OCI-LY7 (cell line): ENCODE measurements at regions of chr1 and their contacts with region 1.

Region 1: DNA sequence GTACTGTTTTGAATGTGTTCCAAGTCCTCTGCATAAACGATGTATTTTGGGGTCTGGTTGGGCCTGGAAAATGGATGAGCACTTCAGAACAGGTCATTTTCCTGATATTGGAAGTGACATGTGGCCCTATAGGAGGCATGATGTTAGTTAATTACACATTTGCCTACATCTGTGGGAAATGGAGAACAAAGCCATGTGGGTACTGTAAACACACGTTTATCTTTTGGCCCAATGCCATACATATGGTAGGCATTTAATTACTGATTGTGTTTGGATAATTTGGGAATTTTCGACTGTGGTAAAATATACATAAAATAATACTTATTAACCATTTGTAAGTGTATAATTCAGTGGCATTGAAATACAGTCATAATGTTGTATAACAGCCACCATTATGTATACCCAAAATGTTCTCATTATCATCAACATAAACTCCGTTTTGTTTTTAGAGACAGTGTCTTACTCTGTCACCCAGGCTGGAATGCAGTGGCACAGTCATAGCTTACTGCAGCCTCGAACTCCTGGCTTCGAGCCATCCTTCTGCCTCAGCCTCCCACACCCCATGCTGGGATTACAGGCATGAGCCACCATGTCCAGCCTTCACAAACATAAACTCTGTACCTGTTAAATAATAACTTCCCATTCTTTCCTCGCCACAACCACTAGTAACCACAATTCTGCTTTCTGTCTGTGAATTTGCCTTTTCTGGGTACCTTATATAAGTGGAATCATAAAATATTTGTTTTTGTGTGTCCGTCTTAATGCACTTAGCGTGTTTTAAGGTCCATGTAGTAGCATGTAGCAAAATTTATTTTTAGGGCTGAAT is 11.9 kb upstream of the RNPEP start:
- DNase-seq: no peak
- H3K4me3 ChIP-seq: no peak overlapping the region
- H3K27ac ChIP-seq: no peak overlapping the region
- H3K4me1 ChIP-seq: peaks cover 8% of the 10 kb centered on the region
- CTCF ChIP-seq: no peak

Region 2: DNA sequence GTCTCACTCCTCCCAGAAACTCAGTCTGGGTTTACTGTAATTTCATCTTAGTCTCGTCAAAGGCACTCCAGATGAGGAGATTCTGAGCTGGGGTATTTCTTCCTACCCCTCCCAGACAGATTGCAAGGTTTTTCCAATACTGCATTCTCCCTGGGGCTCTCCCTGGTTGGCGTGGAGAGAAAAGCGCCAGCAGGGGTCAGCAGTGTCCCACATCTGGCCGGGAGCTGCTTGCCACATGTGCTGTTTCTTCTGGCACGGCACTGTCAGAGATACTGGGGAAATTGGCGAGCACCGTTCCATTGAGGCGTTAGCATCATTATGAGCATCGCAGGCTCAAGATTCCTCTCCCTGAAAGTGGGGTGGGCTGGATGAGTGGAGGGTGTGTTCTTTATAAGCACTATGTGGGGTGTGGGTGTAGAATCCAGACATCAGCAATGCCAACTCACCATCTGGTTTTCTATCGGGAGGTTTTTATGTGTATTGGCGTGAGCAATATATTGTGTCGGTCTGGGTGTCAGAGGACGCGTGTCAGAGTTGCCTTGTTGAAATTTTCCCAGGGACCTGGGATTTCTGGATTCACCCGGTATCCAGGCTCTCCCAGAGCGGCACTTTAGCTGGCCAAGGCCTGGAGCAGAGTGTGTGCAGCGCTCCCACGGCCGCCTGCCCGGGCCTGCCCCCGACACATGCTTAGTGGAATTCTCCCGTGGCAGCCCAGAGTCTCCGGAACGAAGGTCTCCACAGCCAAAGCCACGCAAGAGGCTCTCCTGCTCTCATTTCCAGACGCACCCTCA is 439.6 kb before region 1 on chr1:
- CTCF ChIA-PET with region 1: no interaction called
- POLR2A ChIA-PET with region 1: no interaction called
- intact Hi-C with region 1: no loop called
- DNase-seq: peak; percentile 39
- H3K4me3 ChIP-seq: no peak overlapping the region
- H3K27ac ChIP-seq: no peak overlapping the region
- H3K4me1 ChIP-seq: no peaks in the 10 kb centered on the region
- CTCF ChIP-seq: peak; percentile 79

Region 3: GRCh38 chr1:201828820-201829774 is 141.4 kb before region 1 on chr1 and contains the start of gene IPO9:
- CTCF ChIA-PET with region 1: no interaction called
- POLR2A ChIA-PET with region 1: interaction called, 3 read pairs
- intact Hi-C with region 1: loop called (anchors 5 kb)
- DNase-seq: peak; percentile 94
- H3K4me3 ChIP-seq: peak within 1 kb of the TSS; percentile 88
- H3K27ac ChIP-seq: peak within 1 kb of the TSS; percentile 77
- H3K4me1 ChIP-seq: peaks cover 30% of the 10 kb centered on the region
- CTCF ChIP-seq: peak; percentile 93
- total RNA-seq, gene IPO9: 47.2 and 53.3 TPM in 2 replicates

Region 4: GRCh38 chr1:201877877-201878401 is 92.6 kb before region 1 on chr1:
- CTCF ChIA-PET with region 1: interaction called, 3 read pairs
- POLR2A ChIA-PET with region 1: no interaction called
- intact Hi-C with region 1: loop called (anchors 5 kb)
- DNase-seq: peak; percentile 49
- H3K4me3 ChIP-seq: no peak overlapping the region
- H3K27ac ChIP-seq: no peak overlapping the region
- H3K4me1 ChIP-seq: no peaks in the 10 kb centered on the region
- CTCF ChIP-seq: peak; percentile 78

Region 5: DNA sequence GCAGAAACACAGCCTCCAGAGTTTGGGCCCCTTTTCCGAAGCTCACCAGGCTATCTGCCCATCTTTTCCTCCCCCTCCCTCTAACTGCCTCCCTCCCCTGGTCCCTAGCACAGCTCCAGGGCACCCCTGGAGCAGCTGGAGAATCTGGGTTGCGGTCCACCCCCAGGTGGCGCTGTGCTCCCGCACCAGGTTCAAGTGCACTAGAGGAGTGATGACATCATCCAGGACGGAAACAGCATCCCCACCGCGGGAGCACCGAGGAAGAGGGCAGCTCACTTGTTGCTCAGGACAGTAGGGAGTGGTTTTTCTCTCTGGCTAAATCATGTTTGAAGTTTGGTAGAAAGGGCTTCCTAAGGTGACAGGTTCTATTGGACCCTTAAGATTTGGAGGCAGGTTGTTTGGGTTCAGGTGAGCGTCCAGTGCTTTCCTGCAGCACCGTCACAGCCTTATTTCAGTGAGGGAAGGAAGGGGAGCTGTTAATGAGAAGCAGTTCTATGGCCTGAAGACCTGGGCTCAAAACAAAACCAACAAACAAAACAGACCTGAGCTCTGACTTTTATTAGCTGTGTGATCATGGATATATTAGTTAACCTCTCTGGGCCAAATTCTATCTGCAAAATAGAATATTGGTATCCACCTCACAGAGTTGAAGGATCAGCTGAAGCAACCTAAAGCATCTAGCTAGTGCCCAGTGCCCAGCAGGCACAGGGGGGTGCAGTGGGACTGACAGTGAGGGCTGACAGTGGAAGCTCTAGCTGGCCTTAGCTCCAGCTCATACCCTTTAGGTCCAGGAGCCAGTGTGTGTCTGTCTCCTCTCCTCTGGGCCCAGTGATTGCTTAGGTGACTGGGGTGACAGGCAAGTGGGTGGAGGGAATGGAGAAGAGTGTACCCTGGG is 74.4 kb before region 1 on chr1:
- CTCF ChIA-PET with region 1: interaction called, 8 read pairs
- POLR2A ChIA-PET with region 1: interaction called, 3 read pairs
- intact Hi-C with region 1: loop called (anchors 1 kb)
- DNase-seq: peak; percentile 85
- H3K4me3 ChIP-seq: no peak overlapping the region
- H3K27ac ChIP-seq: no peak overlapping the region
- H3K4me1 ChIP-seq: no peaks in the 10 kb centered on the region
- CTCF ChIP-seq: peak; percentile 99